ENCODE measurements at regions of chr1 and their contacts with region 1.

Region 1: DNA sequence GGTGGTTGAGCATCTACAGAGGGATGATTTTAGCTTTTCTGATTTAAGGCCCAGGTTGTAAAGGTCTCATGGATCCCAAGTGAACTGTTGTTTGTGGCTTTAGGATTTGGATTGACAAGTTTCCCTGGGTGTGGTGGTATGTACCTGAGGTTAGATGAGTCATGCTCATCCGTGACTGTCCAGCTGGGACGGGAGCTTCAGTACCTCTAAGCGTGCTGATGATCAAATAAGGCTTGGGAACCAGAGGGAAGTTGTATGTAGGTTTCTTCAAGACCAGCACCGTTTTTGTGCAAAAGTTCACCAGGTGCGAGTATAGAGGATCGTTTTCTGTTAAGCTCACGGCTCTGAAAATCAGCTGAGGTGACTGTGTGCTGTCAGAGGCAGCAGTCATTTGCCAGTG is 19.8 kb downstream of the PLA2G2E start:
- DNase-seq: peak; percentile 94
- H3K4me3 ChIP-seq: no peak overlapping the region
- H3K27ac ChIP-seq: peak overlapping the region; percentile 56
- H3K4me1 ChIP-seq: peaks cover 20% of the 10 kb centered on the region
- H3K27me3 ChIP-seq: no peaks in the 10 kb centered on the region
- CTCF ChIP-seq: no peak

Region 2: GRCh38 chr1:19882111-19883071 is 21.2 kb before region 1 on chr1 and contains the start of gene OTUD3:
- CTCF ChIA-PET with region 1: interaction called, 4 read pairs
- dilution Hi-C with region 1: no loop called
- in situ Hi-C with region 1: no loop called
- intact Hi-C with region 1: loop called (anchors 1 kb)
- DNase-seq: peak; percentile 94
- H3K4me3 ChIP-seq: peak within 1 kb of the TSS; percentile 72 to 85 (median 74)
- H3K27ac ChIP-seq: peak within 1 kb of the TSS; percentile 66
- H3K4me1 ChIP-seq: peaks cover 37% of the 10 kb centered on the region
- H3K27me3 ChIP-seq: no peaks in the 10 kb centered on the region
- CTCF ChIP-seq: peak; percentile 79 to 90
- total RNA-seq, gene OTUD3: 3.3 to 11.5 TPM